ENCODE measurements at regions of chr2 and their contacts with region 1.

Region 1: DNA sequence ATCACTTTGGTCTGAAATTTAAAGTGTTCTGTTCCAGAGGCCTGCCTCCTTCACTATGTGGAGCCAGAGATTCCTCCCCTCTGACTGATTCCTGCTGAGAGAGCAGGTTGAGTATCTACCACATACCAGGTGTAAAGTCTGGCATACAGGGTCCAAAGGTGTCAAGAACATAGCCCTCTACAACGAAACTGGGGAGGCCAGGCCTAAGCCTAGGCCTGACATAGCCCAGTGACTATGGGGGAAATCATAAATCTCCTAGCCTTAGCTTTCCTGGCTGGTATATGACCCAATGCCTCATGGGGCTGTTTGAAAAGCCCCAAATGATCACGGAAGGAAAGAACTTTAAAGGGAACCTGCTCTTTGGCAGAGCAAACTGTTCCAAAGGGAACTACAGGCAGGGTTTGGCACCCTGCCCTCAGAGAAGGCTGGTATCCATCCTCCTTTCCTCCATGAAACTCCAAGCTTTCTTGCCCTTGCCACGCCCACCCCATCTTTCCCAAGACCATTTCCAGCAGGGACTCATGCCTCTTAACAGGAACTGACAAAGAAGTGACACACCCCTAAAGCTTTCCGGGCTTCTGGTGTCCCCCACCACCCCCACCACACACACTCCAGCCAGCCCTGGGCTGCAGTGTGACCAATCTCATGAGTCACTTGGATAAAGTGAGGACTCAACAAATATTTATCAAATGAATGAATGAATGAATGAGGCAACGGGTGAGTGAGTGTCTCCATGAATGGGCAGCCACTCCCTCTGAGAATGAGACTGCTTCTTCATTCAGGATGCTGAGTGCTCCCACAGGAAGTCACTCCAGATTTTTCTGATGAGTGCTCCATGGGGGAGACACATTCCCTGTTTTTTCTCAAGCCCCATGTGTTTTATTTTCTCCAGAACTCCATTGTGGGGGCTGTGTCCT is 114.5 kb upstream of the STPG4 start:
- DNase-seq: peak; percentile 84
- H3K4me3 ChIP-seq: no peak overlapping the region
- H3K27ac ChIP-seq: peak overlapping the region; percentile 80
- H3K4me1 ChIP-seq: peaks cover 21% of the 10 kb centered on the region
- H3K27me3 ChIP-seq: no peaks in the 10 kb centered on the region
- CTCF ChIP-seq: no peak

Region 2: GRCh38 chr2:47165001-47165555 is 104.5 kb before region 1 on chr2:
- intact Hi-C with region 1: no loop called
- DNase-seq: no peak
- H3K4me3 ChIP-seq: no peak overlapping the region
- H3K27ac ChIP-seq: no peak overlapping the region
- H3K4me1 ChIP-seq: peaks cover 6% of the 10 kb centered on the region
- H3K27me3 ChIP-seq: no peaks in the 10 kb centered on the region
- CTCF ChIP-seq: no peak

Region 3: GRCh38 chr2:47218066-47218581 is 51.5 kb before region 1 on chr2:
- intact Hi-C with region 1: loop called (anchors 2 kb)
- DNase-seq: peak; percentile 86
- H3K4me3 ChIP-seq: peak overlapping the region; percentile 23
- H3K27ac ChIP-seq: peak overlapping the region; percentile 92
- H3K4me1 ChIP-seq: peaks cover 10% of the 10 kb centered on the region
- H3K27me3 ChIP-seq: no peaks in the 10 kb centered on the region
- CTCF ChIP-seq: no peak

Region 4: DNA sequence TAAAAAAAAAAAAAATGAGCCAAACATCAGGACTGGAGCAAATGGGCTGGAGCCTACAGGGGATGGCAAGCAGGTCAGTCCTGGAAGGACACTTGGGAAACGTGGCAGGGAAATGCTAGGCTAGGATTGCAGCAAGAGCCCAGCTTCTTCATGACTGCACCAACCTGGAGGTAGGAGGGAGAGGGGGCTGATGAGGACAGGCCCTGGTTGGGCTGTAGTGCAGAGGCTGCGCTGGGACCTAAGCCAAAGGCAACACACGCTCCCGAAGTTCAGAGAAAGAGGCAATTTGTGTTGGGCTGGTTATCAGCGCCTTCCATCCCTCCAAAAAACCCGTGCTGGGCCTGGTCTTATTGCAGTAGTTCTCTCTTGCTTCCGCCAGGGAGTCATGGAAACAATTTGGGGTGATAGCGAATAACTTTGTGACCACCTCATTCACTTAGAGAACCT is 32.2 kb before region 1 on chr2:
- intact Hi-C with region 1: no loop called
- DNase-seq: no peak
- H3K4me3 ChIP-seq: no peak overlapping the region
- H3K27ac ChIP-seq: no peak overlapping the region
- H3K4me1 ChIP-seq: no peaks in the 10 kb centered on the region
- H3K27me3 ChIP-seq: no peaks in the 10 kb centered on the region
- CTCF ChIP-seq: no peak

Measured in colonic mucosa (tissue), 4 donors.